ENCODE measurements at regions of chr1 and their contacts with region 1.

Region 1: DNA sequence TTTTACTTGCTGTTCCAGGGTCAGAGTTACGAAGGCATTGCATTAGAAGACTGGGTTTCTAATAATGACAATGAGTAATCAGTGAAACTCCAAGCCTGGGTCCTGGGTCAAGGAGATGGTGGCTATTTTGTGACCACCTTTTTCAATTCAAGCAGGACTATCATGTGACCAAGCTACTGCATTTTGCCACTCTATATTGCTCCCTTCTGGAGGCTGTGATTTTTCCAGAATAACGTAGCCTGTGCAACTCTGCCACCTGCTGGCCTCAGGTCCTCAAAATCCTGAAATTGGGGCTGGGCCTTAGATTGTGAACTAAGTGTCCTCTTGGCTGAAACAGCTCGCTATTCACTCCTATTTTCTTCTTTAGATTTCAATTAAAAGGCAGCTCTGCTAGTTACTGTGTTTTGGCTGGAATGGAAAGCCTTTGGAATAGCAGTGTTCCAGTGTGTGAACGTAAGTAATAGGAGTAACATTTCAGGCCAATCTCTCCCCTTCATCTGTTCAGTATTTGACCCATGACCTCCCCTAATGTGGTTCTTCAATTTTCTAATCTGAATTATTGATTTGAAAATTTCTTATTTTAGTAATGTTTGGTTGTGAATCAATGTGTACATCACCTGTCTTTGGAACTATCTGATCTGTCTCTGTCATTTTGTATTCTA is 52.9 kb upstream of the CD46 start:
- H3K4me3 ChIP-seq: no peak overlapping the region
- H3K27ac ChIP-seq: no peak overlapping the region
- H3K4me1 ChIP-seq: no peaks in the 10 kb centered on the region
- CTCF ChIP-seq: peak; percentile 60; the same call in 1 of the 2 replicates

Region 2: GRCh38 chr1:207654320-207654719 is 44.6 kb before region 1 on chr1:
- CTCF ChIA-PET with region 1: interaction called, 10 read pairs
- POLR2A ChIA-PET with region 1: no interaction called
- H3K4me3 ChIP-seq: no peak overlapping the region
- H3K27ac ChIP-seq: no peak overlapping the region
- H3K4me1 ChIP-seq: no peaks in the 10 kb centered on the region
- CTCF ChIP-seq: no peak

Region 3: GRCh38 chr1:207711285-207711684 is 12.3 kb after region 1 on chr1:
- CTCF ChIA-PET with region 1: interaction called, 19 read pairs
- POLR2A ChIA-PET with region 1: no interaction called
- H3K4me3 ChIP-seq: no peak overlapping the region
- H3K27ac ChIP-seq: no peak overlapping the region
- H3K4me1 ChIP-seq: no peaks in the 10 kb centered on the region
- CTCF ChIP-seq: peak; percentile 23; the same call in 1 of the 2 replicates